ENCODE measurements at regions of chr19 and their contacts with region 1.

Region 1: DNA sequence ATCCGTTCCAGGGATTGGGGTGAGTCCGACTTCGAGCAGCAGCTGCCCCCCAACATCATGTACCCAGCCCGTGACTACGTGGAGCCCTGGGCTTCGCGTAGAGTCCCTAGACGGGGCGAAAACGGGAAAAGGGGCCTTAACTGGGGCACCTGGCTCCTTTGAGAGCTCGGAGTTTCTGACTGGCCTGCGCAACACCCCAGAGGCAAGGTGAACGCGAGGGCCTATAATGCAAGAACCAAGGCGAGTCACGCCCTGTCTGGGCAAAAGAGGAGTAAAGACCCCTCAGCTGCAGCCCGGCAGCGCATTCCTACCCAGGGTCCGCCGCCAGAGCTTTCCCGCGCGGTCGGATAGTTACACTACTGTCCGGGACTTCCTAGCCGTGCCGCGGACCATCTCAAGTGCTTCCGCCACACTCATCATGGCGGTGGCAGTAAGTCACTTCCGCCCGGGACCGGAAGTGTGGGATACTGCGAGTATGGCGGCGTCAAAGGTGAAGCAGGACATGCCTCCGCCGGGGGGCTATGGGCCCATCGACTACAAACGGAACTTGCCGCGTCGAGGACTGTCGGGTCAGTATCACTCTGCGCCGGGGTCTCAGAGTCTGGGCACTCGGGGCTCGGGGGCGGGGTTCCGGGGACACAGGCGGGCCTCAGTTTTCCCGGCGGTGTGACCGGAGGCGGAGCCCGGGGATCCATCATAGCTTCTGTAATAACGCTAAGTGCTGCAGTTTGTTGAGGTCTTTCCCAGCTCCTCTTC is at the start of gene NDUFA13:
- DNase-seq: peak; percentile 93
- H3K4me3 ChIP-seq: peak within 1 kb of the TSS; percentile 90 to 99 (median 94)
- H3K27ac ChIP-seq: peak within 1 kb of the TSS; percentile 68
- H3K4me1 ChIP-seq: peaks cover 11% of the 10 kb centered on the region
- H3K27me3 ChIP-seq: no peaks in the 10 kb centered on the region
- CTCF ChIP-seq: peak in 1 of 2 donors; percentile 17
- POLR2A ChIP-seq: peak; percentile 91
- total RNA-seq, gene NDUFA13: 246 and 252 TPM in 2 replicates

Region 2: GRCh38 chr19:19540715-19541440 is 24.9 kb after region 1 on chr19:
- CTCF ChIA-PET with region 1: no interaction called
- POLR2A ChIA-PET with region 1: no interaction called
- dilution Hi-C with region 1: no loop called
- intact Hi-C with region 1: loop called (anchors 1 kb)
- DNase-seq: no peak
- H3K4me3 ChIP-seq: no peak overlapping the region
- H3K27ac ChIP-seq: no peak overlapping the region
- H3K4me1 ChIP-seq: no peaks in the 10 kb centered on the region
- H3K27me3 ChIP-seq: peaks cover 25 to 29% of the 10 kb centered on the region in 2 experiments
- CTCF ChIP-seq: no peak
- POLR2A ChIP-seq: no peak